Activated B cell treated with CpG ODN at 0.5 μM for 24 hours (primary cell): ENCODE measurements at regions of chr17 and their contacts with region 1.

Region 1: DNA sequence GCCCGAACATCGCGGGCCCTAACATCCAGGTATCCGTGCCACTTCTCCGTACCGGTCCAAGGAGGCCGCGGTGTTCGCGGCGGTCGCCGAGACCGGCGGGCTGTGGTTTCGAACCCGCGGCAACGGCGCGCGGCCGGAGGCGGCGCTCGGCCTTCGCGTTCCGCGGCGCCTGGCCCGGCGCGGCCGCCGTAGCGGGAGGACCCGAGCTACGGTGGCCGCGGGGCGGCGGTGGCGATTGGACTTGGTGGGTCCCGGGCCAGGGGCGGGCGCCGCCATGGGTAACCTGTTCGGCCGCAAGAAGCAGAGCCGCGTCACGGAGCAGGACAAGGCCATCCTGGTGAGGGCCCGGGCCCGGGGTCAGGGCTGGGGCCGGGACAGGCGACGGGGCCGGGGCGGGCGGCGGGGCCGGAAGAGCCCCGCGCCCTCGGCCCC is at the start of gene CHMP6:
- DNase-seq: peak; percentile 81
- ATAC-seq: peak; percentile 62
- H3K4me3 Mint-ChIP-seq: peak within 1 kb of the TSS; percentile 83
- H3K27ac Mint-ChIP-seq: peak within 1 kb of the TSS; percentile 50
- H3K4me1 Mint-ChIP-seq: peaks cover 43% of the 10 kb centered on the region
- H3K27me3 Mint-ChIP-seq: no peaks in the 10 kb centered on the region
- CTCF ChIP-seq: no peak
- total RNA-seq, gene CHMP6: 35.1 and 36.6 TPM in 2 replicates

Region 2: DNA sequence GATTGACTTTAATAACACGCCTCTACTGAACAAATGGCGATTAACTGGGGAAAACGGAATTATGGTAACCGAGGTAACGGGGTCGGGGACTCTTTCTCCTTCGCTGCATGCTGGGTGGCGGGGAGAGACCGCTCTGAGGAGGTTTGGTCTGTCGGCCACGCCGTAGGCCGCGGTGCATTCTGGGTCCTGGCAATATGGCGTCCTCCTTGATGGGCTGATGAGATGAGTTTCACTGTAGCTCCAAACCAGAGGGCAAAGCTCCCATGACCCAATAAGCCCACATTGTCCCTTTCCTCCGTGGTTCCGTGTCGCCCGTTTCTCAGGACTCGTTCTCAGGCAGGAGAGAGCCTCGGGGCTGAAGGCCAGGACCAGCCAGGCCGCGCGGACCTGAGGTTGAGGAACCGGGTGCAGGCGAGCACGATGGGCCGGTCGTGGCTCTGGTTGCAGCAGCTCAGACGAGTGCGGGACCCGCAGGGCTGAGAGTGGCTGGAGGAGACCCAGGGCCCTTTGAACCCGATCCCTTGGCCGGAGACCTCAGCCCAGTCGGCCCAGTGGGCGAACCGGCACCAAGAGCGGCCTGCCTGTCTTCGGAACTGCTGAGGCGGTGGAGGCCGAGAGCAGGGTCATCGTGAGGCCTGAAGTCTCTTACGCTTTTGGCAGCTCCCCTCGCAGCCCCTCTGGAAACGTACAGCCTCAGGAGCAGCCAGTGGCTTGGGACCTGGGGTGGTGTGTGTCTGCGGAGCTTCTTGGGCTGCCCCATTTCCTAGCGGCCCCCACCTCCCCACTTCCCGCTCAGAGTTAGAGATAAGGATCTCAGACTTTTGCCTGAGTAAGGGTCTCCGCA is 446.8 kb before region 1 on chr17 and contains the start of gene RPTOR:
- CTCF ChIA-PET with region 1: no interaction called
- POLR2A ChIA-PET with region 1: no interaction called
- intact Hi-C with region 1: loop called (anchors 1 kb)
- DNase-seq: peak; percentile 83
- ATAC-seq: peak; percentile 99
- H3K4me3 Mint-ChIP-seq: peak within 1 kb of the TSS; percentile 96
- H3K27ac Mint-ChIP-seq: peak within 1 kb of the TSS; percentile 87
- H3K4me1 Mint-ChIP-seq: peaks cover 24% of the 10 kb centered on the region
- H3K27me3 Mint-ChIP-seq: peaks cover 9% of the 10 kb centered on the region
- CTCF ChIP-seq: no peak
- total RNA-seq, gene RPTOR: 48.9 and 65.9 TPM in 2 replicates

Region 3: DNA sequence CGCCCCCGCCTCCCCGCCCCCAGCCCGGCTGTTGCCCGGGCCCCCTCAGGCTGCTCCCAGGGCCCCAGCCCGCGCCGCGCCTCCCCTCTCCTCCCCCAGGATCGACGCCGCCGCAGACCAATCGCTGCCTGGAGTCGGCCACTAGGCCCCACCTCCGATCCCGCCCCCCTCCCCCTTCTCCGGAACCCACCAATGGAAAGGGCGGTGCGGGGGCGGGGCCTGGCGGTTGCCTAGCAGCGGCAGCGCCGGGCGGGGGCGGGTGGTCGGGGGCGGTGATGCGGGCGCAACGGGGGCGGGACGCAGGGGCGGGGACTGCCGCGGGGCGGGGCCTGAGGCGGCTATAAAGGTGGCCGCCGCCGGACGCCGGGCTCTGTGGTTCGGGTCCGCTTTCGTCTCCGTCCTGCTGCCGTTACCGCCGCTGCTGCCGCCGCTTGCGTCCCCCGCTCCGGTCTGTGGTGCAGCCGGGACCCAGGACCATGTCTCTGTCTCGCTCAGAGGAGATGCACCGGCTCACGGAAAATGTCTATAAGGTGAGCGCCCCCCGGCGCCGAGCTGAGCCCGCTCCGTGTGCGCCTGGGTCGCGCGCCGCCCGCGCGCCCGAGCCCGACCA is 43.2 kb after region 1 on chr17 and contains the start of gene BAIAP2:
- CTCF ChIA-PET with region 1: no interaction called
- POLR2A ChIA-PET with region 1: no interaction called
- intact Hi-C with region 1: loop called (anchors 2 kb)
- DNase-seq: peak; percentile 91
- ATAC-seq: peak; percentile 88
- H3K4me3 Mint-ChIP-seq: peak within 1 kb of the TSS; percentile 88
- H3K27ac Mint-ChIP-seq: peak within 1 kb of the TSS; percentile 69
- H3K4me1 Mint-ChIP-seq: peaks cover 12% of the 10 kb centered on the region
- H3K27me3 Mint-ChIP-seq: peaks cover 40% of the 10 kb centered on the region
- CTCF ChIP-seq: no peak
- total RNA-seq, gene BAIAP2: 5.3 and 6.8 TPM in 2 replicates

Region 4: GRCh38 chr17:81101614-81102306 is 110.1 kb after region 1 on chr17:
- CTCF ChIA-PET with region 1: interaction called, 10 read pairs
- POLR2A ChIA-PET with region 1: no interaction called
- intact Hi-C with region 1: no loop called
- DNase-seq: peak; percentile 84
- ATAC-seq: peak; percentile 100
- H3K4me3 Mint-ChIP-seq: no peak overlapping the region
- H3K27ac Mint-ChIP-seq: no peak overlapping the region
- H3K4me1 Mint-ChIP-seq: peaks cover 3% of the 10 kb centered on the region
- H3K27me3 Mint-ChIP-seq: peaks cover 10% of the 10 kb centered on the region
- CTCF ChIP-seq: peak; percentile 91